Activated T-helper 1 cell treated with anti-CD3 and anti-CD28 coated beads, Interleukin-12 subunit alpha, Interleukin-12 subunit beta, Interleukin-2, Interleukin-4 antibody, amounts not matched to agents 30 ng/mL and 10 ng/mL and 1 ng/mL, durations not matched to agents 14 hours and 24 hours and 36 hours (primary cell): ENCODE measurements at regions of chr12 and their contacts with region 1.

Region 1: DNA sequence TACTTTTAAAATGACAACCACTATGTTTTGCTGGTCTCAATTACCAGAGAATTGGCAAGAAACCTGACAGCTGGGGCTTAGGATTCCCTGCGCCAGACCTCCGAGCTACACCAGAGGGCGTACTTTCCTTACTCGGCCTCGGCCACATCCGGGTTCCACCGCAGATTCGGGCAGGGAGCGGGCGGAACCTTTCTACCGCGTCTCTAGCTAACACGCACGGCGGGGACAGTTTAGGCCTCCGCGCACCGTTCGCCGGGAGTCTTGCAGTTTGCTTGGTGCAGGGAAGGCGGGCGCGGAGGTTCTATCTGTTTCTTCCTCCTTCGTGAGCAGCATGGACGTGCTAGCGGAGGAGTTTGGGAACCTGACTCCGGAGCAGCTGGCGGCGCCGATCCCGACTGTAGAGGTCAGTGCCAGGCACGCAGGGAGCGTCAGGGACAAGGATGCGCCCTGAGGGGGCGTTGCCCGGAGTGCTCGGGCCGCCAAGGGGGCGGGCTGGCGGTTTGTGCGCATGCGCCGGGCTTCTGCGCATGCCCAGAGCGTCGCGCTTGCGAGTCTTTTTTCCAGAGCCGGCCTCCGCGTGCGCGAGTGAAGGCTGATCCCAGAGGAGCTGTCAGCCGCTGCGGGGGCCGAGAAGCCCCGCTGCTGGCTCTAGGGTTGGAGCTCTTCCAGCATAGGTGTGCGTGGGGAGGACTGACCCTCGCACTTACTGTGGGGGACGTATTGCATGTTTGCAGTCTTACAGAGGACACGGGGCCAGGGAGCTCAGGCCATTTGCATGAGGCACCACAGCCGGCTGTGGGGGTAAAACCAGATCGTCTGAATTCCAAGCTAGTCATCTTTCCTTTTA is at the start of gene POLR3B:
- DNase-seq: peak; percentile 94
- H3K4me3 Mint-ChIP-seq: peak within 1 kb of the TSS; percentile 85
- H3K27ac Mint-ChIP-seq: peak within 1 kb of the TSS; percentile 79
- H3K4me1 Mint-ChIP-seq: peaks cover 16% of the 10 kb centered on the region
- H3K27me3 Mint-ChIP-seq: no peaks in the 10 kb centered on the region
- total RNA-seq, gene POLR3B: 11.5 and 14.3 TPM in 2 replicates

Region 2: DNA sequence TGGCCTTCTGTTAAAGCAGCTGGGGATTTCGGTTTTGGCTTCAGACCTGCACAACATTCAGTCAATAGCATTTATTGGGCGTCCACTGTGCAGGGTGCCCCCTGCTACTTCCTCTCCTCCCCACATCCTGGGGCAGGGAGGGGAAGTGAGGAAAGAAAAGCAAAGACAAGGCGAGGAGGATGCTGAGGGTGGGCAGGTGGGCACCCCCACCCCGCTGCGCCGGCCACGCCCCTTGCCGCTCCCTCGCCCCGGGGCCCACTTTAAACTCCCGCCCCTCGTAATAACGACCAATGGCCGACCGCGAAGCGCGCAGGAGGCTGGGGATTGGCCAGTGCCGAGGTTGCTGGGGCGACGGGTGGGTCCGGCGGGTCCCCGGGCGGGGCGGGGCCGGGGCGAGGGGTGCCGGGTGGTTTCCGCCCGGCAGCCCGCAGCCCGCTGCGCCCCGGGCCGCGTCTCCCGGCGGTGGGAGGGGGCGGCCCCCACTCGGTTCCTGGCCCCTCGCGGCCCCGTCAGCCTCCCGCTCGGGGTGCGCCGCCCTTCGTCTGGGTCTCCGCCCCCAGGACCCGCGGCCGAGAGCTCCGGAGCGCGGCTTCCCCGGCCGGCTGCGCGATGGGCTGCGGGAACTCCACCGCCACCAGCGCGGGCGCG is 1027.4 kb before region 1 on chr12 and contains the start of gene C12orf75:
- intact Hi-C with region 1: loop called (anchors 2 kb)
- DNase-seq: peak; percentile 93
- H3K4me3 Mint-ChIP-seq: peak within 1 kb of the TSS; percentile 87
- H3K27ac Mint-ChIP-seq: peak within 1 kb of the TSS; percentile 91
- H3K4me1 Mint-ChIP-seq: peaks cover 83% of the 10 kb centered on the region
- H3K27me3 Mint-ChIP-seq: no peaks in the 10 kb centered on the region
- total RNA-seq, gene C12orf75: 87.8 and 93.4 TPM in 2 replicates

Region 3: DNA sequence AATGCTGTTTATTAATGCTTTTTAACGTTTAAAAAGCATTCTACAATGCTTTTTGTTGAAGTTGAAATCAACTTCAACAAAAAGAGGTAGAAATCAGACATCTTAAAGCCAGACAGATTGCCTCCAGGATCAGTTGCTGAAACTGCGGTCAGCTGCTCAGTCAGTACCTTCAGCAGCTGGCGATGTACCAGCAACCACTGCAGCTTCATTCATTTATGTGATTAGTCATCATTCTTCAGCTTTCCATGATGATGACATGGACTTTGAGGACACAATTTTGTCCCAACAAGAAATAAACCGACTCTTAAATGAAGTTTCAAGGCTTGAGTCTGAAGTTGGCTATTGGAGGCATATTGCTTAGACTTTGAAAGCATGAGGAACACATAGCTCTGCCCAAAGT is 187.5 kb before region 1 on chr12:
- intact Hi-C with region 1: no loop called
- DNase-seq: no peak
- H3K4me3 Mint-ChIP-seq: no peak overlapping the region
- H3K27ac Mint-ChIP-seq: no peak overlapping the region
- H3K4me1 Mint-ChIP-seq: no peaks in the 10 kb centered on the region
- H3K27me3 Mint-ChIP-seq: peaks cover 12% of the 10 kb centered on the region

Region 4: DNA sequence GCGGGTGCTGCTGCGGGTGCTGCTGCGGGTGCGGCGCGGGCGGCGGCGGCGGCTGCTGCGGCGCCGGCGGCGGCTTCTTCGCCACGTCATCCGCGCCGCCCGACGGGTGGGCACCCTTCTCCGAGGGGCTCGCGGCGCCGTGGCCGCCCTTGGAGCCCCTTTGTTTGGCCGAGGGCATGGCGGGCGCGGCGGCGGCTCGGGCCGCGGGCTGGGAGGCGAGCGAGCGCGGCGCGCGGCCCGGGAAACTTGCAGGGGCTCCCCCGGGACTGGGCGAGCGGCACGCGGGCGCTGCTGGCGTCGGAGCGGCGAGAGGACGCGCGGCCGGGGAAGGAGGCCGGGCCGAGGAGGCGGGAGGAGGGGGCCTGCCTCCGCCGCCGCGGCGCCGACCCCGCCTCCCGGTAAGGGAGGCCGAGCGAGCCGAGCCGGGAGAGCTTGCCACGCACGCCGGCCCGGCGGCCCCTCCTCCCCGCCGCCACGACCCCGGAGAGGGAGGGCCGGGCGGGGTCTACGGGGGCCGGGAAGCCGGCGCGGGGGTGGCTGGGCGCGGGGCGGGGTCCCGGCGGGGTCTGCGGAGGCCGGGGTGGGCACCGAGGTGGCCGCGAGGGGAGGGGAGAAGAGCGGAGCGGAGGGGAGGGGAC is 110.0 kb before region 1 on chr12 and contains the start of gene CKAP4:
- intact Hi-C with region 1: loop called (anchors 1 kb)
- DNase-seq: peak; percentile 37
- H3K4me3 Mint-ChIP-seq: peak within 1 kb of the TSS; percentile 66
- H3K27ac Mint-ChIP-seq: peak within 1 kb of the TSS; percentile 15
- H3K4me1 Mint-ChIP-seq: no peaks in the 10 kb centered on the region
- H3K27me3 Mint-ChIP-seq: peaks cover 14% of the 10 kb centered on the region
- total RNA-seq, gene CKAP4: 4.8 and 5.1 TPM in 2 replicates

Region 5: DNA sequence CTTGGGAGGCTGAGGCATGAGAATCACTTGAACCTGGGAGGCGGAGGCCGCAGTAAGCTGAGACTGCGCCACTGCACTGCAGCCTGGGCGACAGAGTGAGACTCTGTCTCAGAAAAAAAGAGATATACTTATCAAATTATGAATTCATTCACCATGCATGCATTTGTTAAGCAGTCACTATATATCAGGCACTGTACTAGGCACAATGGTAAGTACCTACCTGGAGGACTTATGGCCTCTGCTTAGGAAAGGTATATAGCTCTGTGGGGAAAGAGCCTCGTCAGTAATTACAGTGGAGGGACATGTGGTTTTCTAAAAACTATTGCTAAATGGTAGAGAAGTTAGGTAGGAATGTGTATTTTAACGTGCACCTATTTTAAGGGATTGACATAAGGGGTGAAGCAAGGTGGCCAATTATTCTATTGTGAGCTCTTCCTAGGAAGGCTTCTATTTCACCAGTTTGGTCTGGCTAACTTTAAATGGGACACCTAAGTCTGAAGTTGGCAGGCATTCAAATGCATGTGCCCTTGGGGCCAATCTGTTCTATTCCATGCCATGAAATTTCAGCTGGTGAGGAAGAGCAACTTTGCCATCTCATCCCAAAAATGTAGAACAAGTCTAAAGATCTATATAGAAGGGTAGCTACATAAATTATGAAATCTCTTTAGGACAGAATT is 40.2 kb before region 1 on chr12:
- intact Hi-C with region 1: no loop called
- DNase-seq: no peak
- H3K4me3 Mint-ChIP-seq: no peak overlapping the region
- H3K27ac Mint-ChIP-seq: no peak overlapping the region
- H3K4me1 Mint-ChIP-seq: no peaks in the 10 kb centered on the region
- H3K27me3 Mint-ChIP-seq: no peaks in the 10 kb centered on the region

Region 6: DNA sequence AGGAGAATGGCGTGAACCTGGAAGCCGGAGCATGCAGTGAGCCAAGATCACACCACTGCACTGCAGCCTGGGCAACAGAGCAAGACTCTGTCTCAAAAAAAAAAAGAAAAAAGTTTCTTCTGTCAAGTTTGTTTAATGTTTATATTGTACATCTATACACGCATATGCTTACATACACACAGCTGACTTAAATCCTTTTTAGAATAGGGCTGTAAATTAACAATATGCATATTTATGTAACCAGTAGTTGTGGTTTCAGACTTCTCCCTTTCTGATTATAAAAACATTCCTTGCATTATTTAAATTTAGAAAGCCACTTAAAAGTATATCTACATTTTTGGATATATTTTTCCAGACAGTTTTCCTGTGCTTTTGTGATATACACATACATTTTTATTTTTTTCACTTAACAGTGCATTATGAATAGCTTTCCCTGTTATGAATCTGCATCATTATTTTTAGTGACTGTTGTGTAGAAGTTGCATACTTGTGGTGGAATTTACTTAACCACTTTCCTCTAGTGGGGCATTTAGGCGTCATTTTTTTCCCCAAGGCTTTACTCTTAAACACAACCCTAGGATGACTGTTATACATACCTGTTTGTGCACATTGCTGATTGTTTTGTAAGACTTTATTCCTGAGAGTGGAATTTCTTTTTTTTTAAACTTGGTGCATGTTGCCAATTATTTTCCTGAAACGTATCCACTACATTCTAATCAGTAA is 29.2 kb after region 1 on chr12:
- intact Hi-C with region 1: loop called (anchors 1 kb)
- DNase-seq: no peak
- H3K4me3 Mint-ChIP-seq: no peak overlapping the region
- H3K27ac Mint-ChIP-seq: no peak overlapping the region
- H3K4me1 Mint-ChIP-seq: no peaks in the 10 kb centered on the region
- H3K27me3 Mint-ChIP-seq: no peaks in the 10 kb centered on the region

Region 7: DNA sequence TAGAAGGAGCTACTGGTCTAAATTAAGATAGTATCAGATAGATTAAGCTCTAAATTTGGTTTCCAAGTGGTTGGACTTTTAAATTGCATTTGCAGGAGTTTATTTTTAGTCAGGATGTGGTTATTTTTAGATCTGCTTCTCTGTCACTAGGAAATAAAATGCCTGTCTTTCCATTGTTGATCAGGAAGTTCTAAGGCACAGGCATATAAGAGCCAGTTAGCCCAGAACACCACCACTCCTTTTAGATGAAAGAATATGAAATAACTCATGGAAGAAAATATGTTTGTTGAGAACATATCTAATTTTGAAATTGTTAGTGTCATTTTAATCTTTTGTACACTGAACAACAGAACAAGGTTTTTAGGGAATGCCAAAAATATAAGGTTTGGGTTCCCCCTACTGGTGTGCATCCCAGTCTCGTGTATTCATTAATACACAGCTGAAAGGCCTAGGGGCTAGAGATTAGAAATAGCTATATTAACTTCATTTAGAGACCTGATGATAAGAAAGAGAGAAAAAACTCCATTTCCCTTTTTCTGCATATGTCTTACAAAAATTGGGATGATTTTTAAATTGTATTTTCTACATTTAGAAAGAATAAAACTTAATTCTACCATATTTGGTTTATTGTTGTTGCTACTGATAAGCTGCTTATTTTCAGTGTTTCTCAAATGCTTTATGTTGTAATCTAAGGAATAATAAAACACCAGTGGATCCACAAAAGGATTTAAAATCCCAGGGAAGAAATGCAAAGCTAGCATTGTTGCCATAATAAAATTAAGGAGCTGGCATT is 483.9 kb after region 1 on chr12:
- intact Hi-C with region 1: loop called (anchors 10 kb)
- DNase-seq: no peak
- H3K4me3 Mint-ChIP-seq: no peak overlapping the region
- H3K27ac Mint-ChIP-seq: no peak overlapping the region
- H3K4me1 Mint-ChIP-seq: peaks cover 12% of the 10 kb centered on the region
- H3K27me3 Mint-ChIP-seq: no peaks in the 10 kb centered on the region

Region 8: DNA sequence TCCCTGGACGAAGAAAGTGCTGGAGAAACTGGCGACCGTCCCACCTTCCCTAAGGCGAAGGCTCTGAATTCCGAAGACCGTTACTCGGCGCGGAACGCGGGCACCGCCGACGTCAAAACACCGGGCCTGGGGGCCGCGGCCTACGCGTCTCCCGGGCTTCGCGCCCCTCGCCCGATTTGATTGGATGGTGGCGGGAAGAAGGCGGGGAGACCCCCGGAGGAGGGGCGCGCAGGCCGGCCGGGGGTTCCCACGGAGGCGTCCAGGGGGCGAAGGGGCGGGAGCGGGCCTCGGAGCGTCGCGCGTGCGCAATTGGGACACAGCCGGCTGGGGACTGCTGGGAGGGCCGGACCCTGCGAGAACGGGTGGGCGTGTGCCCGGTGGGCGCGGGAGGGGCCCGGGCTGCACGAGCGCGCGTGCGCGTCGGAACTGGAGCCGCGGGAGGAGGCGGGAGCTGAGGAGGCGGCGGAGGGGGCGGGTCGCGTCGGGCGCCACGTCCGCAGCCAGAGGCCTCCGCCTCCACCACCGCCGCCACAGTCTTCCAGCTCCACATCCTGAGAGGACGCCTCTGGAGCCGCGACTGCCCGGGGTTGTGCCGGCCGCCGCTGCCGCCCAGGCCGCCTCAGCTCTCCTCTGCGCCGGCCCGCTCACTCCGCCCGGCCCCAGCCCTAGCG is 597.7 kb after region 1 on chr12 and contains the start of gene TMEM263:
- intact Hi-C with region 1: loop called (anchors 1 kb)
- DNase-seq: peak; percentile 90
- H3K4me3 Mint-ChIP-seq: peak within 1 kb of the TSS; percentile 97
- H3K27ac Mint-ChIP-seq: peak within 1 kb of the TSS; percentile 94
- H3K4me1 Mint-ChIP-seq: peaks cover 21% of the 10 kb centered on the region
- H3K27me3 Mint-ChIP-seq: peaks cover 3% of the 10 kb centered on the region
- total RNA-seq, gene TMEM263: 25.5 and 25.9 TPM in 2 replicates